Astrocyte of the cerebellum (primary cell): ENCODE measurements at regions of chr7 and their contacts with region 1.

Region 1: GRCh38 chr7:132221389-132221788 is 354.9 kb downstream of the PLXNA4 start:
- DNase-seq: no peak
- H3K4me3 ChIP-seq: no peak overlapping the region
- CTCF ChIP-seq: no peak

Region 2: DNA sequence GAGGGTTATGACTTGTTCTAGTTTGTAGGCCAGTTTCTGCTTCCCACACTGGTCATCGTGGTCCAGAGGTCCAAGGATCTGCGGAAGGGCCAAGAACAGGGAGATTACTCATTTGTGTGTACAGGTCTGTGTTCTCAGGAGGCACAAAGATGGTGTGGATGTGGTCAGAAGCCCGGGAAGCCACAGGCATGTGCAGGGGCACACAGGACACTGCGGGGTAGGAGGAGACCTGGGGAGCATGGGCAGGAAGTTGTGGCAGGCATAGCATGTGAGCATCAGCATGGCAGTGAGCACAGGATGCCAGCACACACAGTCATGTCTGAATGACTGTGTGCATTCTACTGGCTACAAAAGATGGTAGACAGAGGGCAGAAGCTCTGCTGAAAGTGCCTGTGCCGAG is 90.9 kb before region 1 on chr7:
- in situ Hi-C with region 1: loop called (anchors 5 kb)
- DNase-seq: peak; percentile 44
- H3K4me3 ChIP-seq: no peak overlapping the region
- CTCF ChIP-seq: no peak

Region 3: GRCh38 chr7:132160611-132161532 is 60.5 kb before region 1 on chr7:
- in situ Hi-C with region 1: no loop called
- DNase-seq: no peak
- H3K4me3 ChIP-seq: no peak overlapping the region
- CTCF ChIP-seq: no peak

Region 4: DNA sequence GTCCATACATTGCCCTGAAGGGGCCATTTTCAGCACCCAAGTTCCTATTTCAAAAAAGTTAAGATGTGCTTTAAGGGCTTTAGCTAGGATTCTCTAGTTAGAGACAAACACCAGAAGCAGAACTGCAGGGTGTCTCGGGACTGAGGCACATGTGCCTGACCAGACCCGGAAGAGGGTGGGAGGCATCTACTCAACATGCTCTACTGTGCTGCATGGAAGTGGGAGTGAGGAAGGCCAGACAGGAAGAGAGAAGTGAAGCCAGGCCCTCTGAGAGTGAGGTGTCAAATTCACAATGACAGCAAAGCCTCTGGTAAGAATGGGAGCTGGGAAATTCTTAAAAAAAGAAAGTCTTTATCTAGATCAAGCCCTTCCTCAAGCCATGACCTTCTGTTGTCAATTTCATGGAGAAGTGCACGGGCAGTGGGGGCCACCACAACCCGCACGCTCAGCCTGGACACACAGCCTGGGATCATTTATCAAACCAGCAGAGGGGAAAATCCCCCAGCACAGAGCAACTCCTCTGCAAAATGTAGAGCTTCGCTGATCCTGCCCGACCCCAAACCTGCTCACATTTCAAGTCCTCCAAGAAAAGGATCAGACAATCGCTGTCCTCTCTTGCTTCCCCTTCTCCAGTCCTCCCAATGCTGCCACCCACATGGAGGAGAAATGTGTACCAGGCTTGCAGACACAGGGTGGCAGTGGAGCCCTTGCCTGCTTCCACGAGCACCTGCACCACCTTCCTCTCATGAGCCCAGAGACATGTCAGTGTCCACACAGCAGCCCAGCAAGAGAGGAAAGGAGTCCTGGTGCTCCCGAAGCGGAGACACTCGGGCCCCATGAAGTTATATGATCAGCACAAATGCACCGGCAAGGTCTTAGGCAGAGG is 316.3 kb after region 1 on chr7:
- in situ Hi-C with region 1: no loop called
- DNase-seq: no peak
- H3K4me3 ChIP-seq: no peak overlapping the region
- CTCF ChIP-seq: no peak